A549 (cell line): ENCODE measurements at regions of chr17 and their contacts with region 1.

Region 1: GRCh38 chr17:74203439-74204240 is at the start of gene RPL38:
- DNase-seq: peak; percentile 95 to 98
- ATAC-seq: peak; percentile 59 to 77
- H3K4me3 ChIP-seq: peak within 1 kb of the TSS; percentile 71
- H3K27ac ChIP-seq: peak within 1 kb of the TSS; percentile 89 to 97
- H3K4me1 ChIP-seq: peaks cover 41% of the 10 kb centered on the region
- CTCF ChIP-seq: peak; percentile 95
- EP300 ChIP-seq: peak in 1 of 2 experiments; percentile 27; a peak in 1 of 5 replicates
- POLR2A ChIP-seq: peak; percentile 96
- RAD21 ChIP-seq: peak in 1 of 2 experiments; percentile 43; a peak in 3 of 5 replicates
- polyA plus RNA-seq, gene RPL38: 2,364 and 3,205 TPM in 2 replicates

Region 2: DNA sequence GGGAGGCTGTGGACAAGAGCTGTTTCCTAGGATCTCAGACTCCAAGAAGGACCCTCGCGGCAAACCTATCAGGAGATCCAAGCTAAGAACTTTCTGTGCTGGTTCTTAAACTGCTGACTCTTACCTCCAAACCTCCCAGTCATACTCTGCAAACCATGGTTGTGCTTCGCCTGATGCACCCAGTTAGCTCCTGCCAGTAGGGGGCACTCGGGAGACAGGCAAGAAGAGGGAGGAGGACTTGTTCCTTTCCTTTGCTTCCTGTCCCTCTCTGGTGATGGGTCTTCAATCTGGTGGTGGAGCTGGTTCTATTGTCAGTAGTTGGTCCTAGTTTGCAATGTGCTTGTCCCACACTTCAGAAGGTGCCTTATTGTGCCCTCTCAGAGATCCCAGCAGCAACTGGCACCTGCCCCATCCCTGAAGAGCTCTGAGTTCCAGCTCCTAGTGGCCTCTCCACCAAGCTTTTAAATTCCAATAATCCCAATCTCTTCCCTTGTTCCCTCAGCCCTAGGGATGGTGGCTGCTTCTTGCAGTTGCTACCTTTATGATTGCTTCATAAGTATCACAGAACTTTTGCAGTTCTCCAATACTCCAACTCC is 113.7 kb before region 1 on chr17:
- CTCF ChIA-PET with region 1: interaction called, 22 read pairs
- POLR2A ChIA-PET with region 1: no interaction called
- DNase-seq: peak; percentile 52 to 79
- ATAC-seq: peak; percentile 52 to 90; a peak in 4 of 6 replicates
- H3K4me3 ChIP-seq: no peak overlapping the region
- H3K27ac ChIP-seq: no peak overlapping the region
- H3K4me1 ChIP-seq: no peaks in the 10 kb centered on the region
- CTCF ChIP-seq: peak; percentile 70
- EP300 ChIP-seq: no peak
- POLR2A ChIP-seq: no peak
- RAD21 ChIP-seq: peak; percentile 66 to 81

Region 3: GRCh38 chr17:74190172-74190571 is 13.5 kb before region 1 on chr17:
- CTCF ChIA-PET with region 1: interaction called, 215 read pairs
- POLR2A ChIA-PET with region 1: interaction called, 20 read pairs
- DNase-seq: peak; percentile 73 to 89
- ATAC-seq: peak; percentile 71 to 90; a peak in 5 of 6 replicates
- H3K4me3 ChIP-seq: no peak overlapping the region
- H3K27ac ChIP-seq: no peak overlapping the region; a peak in 1 of 6 replicates
- H3K4me1 ChIP-seq: peaks cover 30% of the 10 kb centered on the region
- CTCF ChIP-seq: no peak
- EP300 ChIP-seq: no peak
- POLR2A ChIP-seq: no peak
- RAD21 ChIP-seq: no peak

Region 4: GRCh38 chr17:74231928-74232907 is 28.6 kb after region 1 on chr17:
- CTCF ChIA-PET with region 1: interaction called, 11 read pairs
- POLR2A ChIA-PET with region 1: no interaction called
- DNase-seq: no peak
- ATAC-seq: no peak
- H3K4me3 ChIP-seq: no peak overlapping the region
- H3K27ac ChIP-seq: no peak overlapping the region
- H3K4me1 ChIP-seq: 0 out of 3 replicates have a peak, but pooled peaks cover 6% of the 10 kb centered on the region
- CTCF ChIP-seq: no peak
- EP300 ChIP-seq: no peak
- POLR2A ChIP-seq: no peak
- RAD21 ChIP-seq: no peak